Posterior cingulate gyrus (tissue), 11 donors: ENCODE measurements at regions of chr19 and their contacts with region 1.

Region 1: DNA sequence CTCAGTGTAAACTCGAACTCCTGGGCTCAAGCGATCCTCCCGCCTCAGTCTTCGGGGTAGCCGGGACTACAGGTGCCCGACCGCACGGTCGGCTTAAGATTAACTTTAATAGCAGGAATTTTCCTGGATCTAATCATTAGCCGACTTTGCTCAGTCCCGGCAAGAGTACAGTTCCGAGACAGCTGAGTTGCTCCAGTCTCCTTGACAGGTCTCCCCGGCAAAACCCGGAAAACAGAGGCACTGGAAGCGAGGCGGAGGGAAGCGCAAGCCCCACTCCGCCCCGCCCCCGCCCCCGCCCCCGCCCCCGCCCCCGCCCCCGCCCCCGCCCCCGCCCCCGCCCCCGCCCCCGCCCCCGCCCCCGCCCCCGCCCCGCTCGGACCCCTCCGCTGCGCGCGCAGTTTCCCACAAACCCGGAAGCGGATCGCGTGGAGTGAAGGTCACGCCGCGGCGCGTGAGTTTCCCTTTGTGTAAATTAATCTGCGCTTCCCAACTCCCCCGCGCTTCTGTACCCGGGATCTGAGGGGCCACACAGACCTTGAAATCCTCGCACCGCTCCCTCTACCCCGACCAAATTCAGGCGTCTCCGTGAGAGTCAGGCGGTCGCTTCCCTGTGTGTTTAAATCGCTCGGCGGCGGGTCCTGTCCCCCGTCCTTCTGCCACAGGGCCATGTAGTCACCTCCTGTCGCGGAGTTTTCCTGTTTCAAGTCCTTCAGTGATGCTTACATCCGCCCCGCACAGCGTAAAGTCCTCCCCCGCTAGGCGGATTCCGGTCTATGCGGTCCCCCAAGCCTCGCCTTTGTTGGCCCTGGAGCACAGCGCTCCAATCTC is at the start of gene ZNF480:
- DNase-seq: peak; percentile 64 to 96 (median 82)

Region 2: GRCh38 chr19:52171321-52172169 is 125.4 kb before region 1 on chr19 and contains the start of gene ZNF836:
- intact Hi-C with region 1: no loop called
- DNase-seq: peak; percentile 62 to 96 (median 82)

Region 3: DNA sequence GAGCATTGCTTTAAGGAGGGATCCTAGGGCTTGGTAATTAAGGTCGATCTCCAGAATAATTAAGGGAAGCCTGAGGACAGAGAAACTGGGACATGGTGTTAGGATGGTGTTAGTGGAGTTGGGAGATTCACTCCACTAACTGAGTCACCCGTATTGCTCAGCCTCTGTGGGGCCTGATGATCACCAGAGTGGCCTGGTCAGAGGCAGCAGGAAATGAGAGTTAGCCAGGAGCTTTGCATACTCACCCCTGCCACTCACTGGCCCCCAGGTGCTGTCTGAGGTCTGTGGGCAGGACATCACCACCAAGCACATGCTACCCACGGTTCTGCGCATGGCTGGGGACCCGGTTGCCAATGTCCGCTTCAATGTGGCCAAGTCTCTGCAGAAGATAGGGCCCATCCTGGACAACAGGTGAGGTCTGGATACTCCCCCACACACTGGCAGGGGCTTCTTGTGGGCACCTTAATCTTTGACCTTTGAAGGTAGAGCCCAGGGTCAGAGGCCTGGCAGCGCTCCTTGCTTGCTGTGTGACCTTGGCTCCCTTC is 75.1 kb before region 1 on chr19:
- intact Hi-C with region 1: no loop called
- DNase-seq: no peak

Region 4: DNA sequence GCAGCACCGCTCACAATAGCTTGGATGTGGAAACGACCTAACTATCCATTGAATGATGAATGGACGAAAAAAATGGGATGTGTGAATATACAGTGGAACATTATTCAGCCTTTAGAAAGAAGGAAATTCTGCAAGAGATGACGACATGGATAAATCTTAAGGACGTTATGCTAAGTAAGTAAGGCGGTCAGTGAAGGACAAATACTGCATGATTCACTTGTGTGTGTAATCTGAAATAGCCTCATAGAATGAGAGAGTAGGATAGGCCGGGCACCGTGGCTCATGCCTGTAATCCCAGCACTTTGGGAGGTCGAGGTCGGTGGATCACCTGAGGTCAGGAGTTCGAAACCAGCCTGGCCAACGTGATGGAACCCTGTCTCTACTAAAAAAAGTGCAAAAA is 53.0 kb before region 1 on chr19:
- intact Hi-C with region 1: no loop called
- DNase-seq: no peak

Region 5: DNA sequence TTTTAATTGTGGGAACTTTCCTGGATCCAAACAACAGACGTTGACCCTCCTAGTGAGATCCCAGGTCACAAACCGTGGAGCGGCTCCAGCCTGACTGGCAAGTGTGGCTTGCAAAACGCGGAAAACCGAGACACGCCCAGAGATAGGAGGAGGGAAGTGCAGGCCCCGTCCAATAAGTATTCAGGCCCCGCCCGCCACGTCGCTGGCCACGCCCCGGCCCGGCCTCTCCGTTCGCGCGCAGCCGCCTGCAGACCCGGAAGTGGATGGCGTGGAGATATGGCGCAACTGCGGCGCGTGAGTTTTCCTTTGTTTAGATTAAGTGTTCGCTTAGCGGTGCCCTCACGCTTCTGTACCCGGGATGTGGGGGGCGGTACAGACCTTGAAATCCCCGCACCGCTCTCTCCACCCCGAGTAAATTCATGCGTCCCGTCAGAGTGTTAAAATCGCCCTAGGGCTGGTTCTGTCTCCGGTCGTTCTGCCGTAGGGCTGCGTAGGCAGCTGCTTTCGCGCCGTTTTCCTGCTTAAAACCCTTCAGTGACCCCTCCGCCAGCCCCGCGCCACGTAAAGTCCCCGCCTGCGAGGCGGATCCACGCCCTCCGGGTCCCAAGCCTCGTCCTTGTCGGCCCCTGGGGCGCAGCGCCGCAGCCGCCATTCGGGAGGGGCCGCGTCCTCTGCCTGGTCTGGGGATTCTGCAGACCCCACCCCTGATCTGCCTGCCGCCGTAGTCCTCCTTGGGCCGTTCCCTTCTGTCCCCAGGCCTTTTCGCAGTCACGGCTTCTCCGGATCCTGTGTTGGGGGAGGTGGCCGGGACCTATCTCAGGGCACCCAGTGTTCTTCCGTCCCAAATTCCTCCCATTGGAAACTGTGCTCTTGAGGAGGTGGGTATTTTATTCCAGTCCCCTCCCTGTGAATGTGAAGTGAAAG is 27.4 kb before region 1 on chr19 and contains the start of gene ZNF766:
- intact Hi-C with region 1: loop called (anchors 2 kb)
- DNase-seq: peak; percentile 94 to 99 (median 96)

Region 6: DNA sequence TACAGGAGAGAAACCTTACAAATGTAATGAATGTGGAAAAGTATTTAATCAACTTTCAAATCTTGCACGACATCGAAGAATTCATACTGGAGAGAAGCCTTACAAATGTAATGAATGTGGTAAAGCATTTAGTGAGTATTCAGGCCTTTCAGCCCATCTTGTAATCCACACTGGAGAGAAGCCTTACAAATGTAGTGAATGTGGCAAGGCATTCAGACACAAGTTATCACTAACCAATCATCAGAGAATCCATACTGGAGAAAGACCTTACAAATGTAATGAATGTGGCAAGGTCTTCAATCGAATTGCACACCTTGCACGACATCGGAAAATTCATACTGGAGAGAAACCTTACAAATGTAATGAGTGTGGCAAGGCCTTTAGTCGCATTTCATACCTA is 25.4 kb after region 1 on chr19:
- intact Hi-C with region 1: no loop called
- DNase-seq: no peak

Region 7: DNA sequence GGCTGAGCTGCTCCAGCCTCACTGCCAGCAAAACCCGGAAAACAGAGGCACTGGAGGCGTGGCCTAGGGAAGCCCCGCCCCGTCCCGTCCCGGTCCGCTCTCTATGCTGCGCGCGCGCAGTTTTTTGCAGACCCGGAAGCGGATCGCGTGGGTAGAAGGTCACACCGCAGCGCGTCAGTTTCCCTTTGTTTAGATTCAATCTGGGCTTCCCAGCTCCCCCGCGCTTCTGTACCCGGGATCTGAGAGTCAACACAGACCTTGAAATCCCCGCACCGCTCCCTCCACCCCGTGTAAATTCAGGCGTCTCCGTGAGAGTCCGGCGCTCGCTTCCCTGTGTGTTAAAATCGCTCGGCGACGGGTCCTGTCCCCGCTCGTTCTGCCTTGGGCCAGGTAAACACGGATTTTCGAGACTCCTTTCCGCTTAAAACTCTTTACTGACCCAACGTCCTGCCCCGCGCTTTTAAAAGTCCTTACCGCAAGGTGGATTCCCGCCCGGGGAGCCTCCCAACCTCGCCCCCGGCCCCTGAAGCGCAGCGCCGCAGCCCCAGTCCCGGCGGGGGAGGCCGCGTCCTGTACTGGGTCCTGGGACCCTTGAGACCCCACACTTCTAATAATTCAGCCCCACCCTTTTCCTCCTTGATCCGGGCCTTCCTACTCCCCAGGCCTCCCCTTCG is 39.3 kb after region 1 on chr19 and contains the start of gene ZNF610:
- intact Hi-C with region 1: loop called (anchors 2 kb)
- DNase-seq: peak; percentile 84 to 99 (median 91)

Region 8: GRCh38 chr19:52369559-52370340 is 72.8 kb after region 1 on chr19 and contains the start of gene ZNF880:
- intact Hi-C with region 1: loop called (anchors 2 kb)
- DNase-seq: peak; percentile 84 to 99 (median 94)